ENCODE measurements at regions of chr7 and their contacts with region 1.

Region 1: DNA sequence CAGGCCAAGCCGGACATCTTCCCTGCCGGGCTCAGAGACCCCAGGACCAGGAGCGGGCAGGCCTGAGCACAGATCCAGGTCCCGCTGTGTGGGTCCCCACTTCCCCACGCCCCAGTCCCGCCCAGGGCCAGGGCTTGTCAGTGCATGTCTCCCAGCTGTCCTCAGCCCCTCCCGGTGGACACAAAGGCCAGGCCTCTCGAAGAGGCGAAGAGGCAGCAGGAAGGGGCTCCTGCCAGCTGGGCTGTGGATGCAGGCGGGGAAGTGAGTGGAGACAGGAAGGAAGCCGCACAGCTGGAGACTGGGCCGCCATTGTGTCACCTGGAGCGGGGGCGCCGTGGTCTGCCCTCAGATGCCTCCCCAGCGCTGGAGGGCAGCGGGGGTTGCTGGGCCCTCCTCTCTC is 4.8 kb downstream of the GRIFIN start:
- DNase-seq: no peak
- CTCF ChIP-seq: no peak

Region 2: GRCh38 chr7:2384354-2385243 is 86.8 kb before region 1 on chr7:
- CTCF ChIA-PET with region 1: interaction called, 18 read pairs
- POLR2A ChIA-PET with region 1: no interaction called
- DNase-seq: no peak
- CTCF ChIP-seq: peak; percentile 24

Region 3: DNA sequence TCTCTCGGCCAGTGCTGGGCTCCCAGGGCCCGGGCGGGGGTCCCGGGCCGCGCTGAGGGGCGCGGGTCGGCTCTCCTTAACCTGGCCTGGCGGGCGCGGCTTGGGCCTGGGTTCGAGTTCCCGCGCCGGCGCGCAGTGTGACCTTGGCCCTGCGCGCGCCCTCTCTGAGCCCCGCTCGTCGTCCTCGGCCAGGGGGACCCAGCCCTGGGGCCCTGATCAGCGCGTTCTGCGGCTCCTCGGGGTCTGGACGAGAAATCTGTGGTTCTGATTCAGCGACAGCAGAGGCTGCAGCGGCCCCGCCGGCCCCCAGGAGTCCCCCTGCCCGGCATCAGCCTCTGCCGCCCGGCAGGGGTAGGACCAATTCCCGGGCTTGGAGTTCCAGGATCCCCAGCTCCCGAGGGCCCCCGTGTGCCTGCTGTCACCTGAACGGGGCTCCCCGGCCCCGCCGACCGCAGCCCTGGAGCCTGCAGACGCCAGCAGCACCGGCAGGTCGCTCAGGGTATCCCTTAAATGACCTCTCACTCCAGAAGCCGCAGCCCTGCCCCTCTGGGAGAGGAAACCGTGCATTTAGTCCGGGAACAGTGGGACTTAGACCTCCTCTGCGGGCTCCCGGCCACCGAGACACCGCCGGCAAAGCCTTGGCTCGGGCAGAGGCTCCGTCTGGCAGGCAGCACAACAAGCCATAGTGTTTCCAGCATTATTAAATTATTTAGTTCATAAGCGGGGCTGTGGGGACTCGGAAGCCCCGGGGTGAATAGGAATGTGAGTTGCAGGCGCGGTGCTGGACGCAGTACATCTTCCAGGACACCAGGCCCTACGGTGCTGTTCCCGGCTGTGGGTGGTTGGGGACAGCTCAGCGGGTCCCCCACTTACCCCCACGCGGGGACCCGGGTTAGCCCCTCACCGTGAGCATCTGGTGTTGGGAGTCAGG is 67.4 kb before region 1 on chr7:
- CTCF ChIA-PET with region 1: interaction called, 10 read pairs
- POLR2A ChIA-PET with region 1: no interaction called
- DNase-seq: no peak
- CTCF ChIP-seq: no peak

Region 4: DNA sequence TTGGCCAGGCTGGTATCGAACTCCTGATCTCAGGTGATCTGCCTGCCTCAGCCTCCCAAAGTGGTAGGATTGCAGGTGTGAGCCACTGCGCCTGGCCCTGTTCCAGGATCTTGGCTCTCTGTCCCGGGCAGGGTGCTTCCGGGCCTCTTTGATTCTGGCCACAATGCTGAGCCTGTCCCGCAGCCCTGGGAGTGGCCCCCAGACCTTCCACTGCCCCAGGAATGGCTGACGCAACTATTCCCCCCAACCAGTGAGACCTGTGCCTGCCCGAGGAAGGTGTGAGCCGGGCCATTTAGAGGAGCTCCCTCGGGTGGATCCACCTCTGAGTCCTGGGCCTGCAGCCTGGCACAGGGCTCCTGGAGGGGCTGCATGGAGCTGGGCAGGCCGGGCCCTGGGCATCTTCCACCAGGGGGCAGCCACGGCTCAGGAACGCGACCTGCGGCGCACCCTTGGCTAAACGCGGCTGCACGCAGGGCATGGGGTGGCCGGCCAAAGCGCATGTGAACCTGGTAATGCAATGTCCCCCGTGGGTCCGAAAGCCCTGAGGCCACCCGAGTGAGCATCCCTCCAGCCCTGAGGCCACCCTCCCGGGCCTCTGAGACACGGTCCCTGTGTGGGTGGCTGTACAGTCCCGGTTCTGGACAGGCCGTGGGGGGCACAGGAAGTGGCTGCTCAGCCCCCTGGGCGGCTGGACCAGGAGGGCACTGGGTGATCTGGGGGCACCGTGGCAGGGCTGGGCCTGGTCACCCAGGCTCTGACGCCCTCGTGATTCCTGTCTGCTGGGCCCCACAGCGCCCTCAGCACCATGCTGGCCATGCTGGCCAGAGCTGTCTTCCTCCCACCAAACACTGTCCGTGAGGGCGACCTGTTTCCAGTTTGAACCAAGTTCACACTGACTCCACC is 20.0 kb before region 1 on chr7:
- CTCF ChIA-PET with region 1: interaction called, 240 read pairs
- POLR2A ChIA-PET with region 1: no interaction called
- DNase-seq: peak; percentile 90
- CTCF ChIP-seq: peak; percentile 78

Measured in GM10248 (cell line).